ENCODE measurements at regions of chr10 and their contacts with region 1.

Region 1: GRCh38 chr10:70381471-70382421 is 679 bp downstream of the LRRC20 start:
- DNase-seq: peak; percentile 65 to 72
- H3K4me3 ChIP-seq: peak overlapping the region; percentile 73
- H3K4me3 Mint-ChIP-seq: peak overlapping the region; percentile 83
- H3K27ac Mint-ChIP-seq: peak overlapping the region; percentile 61
- H3K4me1 ChIP-seq: peaks cover 38% of the 10 kb centered on the region
- H3K4me1 Mint-ChIP-seq: peaks cover 21% of the 10 kb centered on the region
- H3K27me3 ChIP-seq: no peaks in the 10 kb centered on the region
- H3K27me3 Mint-ChIP-seq: no peaks in the 10 kb centered on the region
- CTCF ChIP-seq: no peak

Region 2: GRCh38 chr10:69527961-69528360 is 853.8 kb before region 1 on chr10:
- CTCF ChIA-PET with region 1: no interaction called
- POLR2A ChIA-PET with region 1: no interaction called
- intact Hi-C with region 1: no loop called
- DNase-seq: no peak
- H3K4me3 ChIP-seq: no peak overlapping the region
- H3K4me3 Mint-ChIP-seq: no peak overlapping the region
- H3K27ac Mint-ChIP-seq: no peak overlapping the region
- H3K4me1 ChIP-seq: no peaks in the 10 kb centered on the region
- H3K4me1 Mint-ChIP-seq: no peaks in the 10 kb centered on the region
- H3K27me3 ChIP-seq: no peaks in the 10 kb centered on the region; the same call in 1 of the 2 replicates
- H3K27me3 Mint-ChIP-seq: peaks cover 17% of the 10 kb centered on the region
- CTCF ChIP-seq: no peak

Region 3: DNA sequence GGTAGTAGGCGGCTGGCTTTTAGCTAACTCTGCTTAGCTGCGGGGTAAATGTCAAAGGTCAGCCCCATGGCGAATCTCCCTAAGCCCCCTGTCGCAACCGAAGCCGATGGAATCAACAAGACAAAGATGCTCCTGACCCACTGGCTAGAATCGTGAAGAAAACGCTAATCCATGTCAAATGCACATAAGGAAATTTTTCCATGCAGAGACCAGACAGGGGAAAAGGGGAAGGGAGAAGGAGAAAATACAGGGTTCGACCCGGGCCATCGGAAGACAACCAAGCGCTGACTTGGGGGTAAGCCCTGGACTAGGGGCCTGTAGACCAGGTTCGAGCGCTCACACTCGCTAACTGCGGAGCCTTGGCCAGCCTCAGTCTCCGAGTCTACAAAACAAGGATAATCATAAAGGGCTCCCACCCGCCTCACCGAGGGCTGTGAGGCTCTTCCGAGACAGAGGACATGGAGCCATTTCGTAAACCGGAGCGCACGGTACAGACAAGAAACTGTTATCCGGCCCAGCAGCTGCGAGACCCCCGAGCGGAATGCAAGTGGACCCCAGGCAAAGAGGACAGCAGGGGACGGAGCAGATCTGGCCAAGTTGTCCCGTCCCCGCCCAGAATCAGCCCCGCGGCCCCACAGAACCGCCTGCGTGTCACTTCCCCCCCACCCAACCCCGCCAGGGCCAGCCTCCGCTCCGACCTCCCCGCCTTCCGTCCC is 211.9 kb before region 1 on chr10:
- CTCF ChIA-PET with region 1: interaction called, 8 read pairs
- POLR2A ChIA-PET with region 1: interaction called, 16 read pairs
- intact Hi-C with region 1: no loop called
- DNase-seq: peak in 1 of 2 experiments; percentile 33
- H3K4me3 ChIP-seq: peak overlapping the region; percentile 66
- H3K4me3 Mint-ChIP-seq: peak overlapping the region; percentile 96
- H3K27ac Mint-ChIP-seq: peak overlapping the region; percentile 98
- H3K4me1 ChIP-seq: peaks cover 5% of the 10 kb centered on the region
- H3K4me1 Mint-ChIP-seq: peaks cover 24% of the 10 kb centered on the region
- H3K27me3 ChIP-seq: no peaks in the 10 kb centered on the region
- H3K27me3 Mint-ChIP-seq: no peaks in the 10 kb centered on the region
- CTCF ChIP-seq: no peak

Region 4: DNA sequence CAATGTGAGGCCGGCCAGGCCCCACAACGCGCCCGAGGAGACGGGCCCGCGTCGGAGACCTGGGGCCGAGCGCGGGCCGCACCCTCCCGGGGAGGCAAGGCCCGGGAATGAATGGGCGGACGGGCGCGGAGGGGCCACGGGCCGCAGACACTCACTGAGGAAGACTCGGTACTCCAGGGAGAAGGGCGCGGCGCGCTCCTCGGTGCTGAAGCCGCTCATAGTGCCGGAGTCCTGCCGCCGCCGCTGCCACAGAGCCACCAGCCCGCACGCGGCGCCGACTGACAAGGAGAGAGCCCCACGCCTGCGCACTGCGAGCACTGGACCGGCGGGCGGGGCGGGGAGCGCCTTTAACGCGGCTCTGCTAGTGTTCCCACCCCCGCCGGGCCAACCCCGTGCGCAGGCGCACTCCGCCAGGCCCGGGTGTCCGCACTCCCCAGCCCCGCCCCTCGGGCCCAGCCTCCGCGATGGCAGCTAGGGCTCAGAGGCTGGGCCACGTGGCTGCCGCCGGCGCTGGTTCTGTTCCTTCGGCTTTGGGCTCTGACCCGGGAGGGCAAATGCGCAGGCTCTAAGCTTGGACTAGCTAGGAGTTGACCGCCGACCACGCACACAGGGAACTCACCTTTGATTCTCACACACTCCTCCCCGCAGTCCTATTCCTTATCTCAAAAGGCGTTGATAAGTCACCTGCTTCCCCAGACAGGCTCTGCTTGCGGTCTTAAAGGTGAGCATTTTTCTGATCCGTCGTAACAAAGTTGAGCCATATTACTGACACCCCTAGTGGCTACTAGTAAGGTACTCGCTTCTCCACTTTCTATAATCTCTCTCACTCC is 148.4 kb before region 1 on chr10 and contains the start of gene PPA1:
- CTCF ChIA-PET with region 1: interaction called, 12 read pairs
- POLR2A ChIA-PET with region 1: interaction called, 6 read pairs
- intact Hi-C with region 1: loop called (anchors 2 kb)
- DNase-seq: peak; percentile 99 to 100
- H3K4me3 ChIP-seq: peak within 1 kb of the TSS; percentile 85
- H3K4me3 Mint-ChIP-seq: peak within 1 kb of the TSS; percentile 76
- H3K27ac Mint-ChIP-seq: peak within 1 kb of the TSS; percentile 99
- H3K4me1 ChIP-seq: peaks cover 19% of the 10 kb centered on the region
- H3K4me1 Mint-ChIP-seq: peaks cover 19% of the 10 kb centered on the region
- H3K27me3 ChIP-seq: no peaks in the 10 kb centered on the region
- H3K27me3 Mint-ChIP-seq: no peaks in the 10 kb centered on the region
- CTCF ChIP-seq: peak; percentile 56 to 81
- total RNA-seq, gene PPA1: 350 and 353 TPM in 2 replicates

Region 5: GRCh38 chr10:70324339-70324861 is 57.3 kb before region 1 on chr10:
- CTCF ChIA-PET with region 1: interaction called, 10 read pairs
- POLR2A ChIA-PET with region 1: no interaction called
- intact Hi-C with region 1: no loop called
- DNase-seq: peak in 1 of 2 experiments; percentile 31
- H3K4me3 ChIP-seq: no peak overlapping the region
- H3K4me3 Mint-ChIP-seq: no peak overlapping the region
- H3K27ac Mint-ChIP-seq: peak overlapping the region; percentile 24
- H3K4me1 ChIP-seq: peaks cover 22% of the 10 kb centered on the region
- H3K4me1 Mint-ChIP-seq: peaks cover 21% of the 10 kb centered on the region
- H3K27me3 ChIP-seq: no peaks in the 10 kb centered on the region
- H3K27me3 Mint-ChIP-seq: no peaks in the 10 kb centered on the region
- CTCF ChIP-seq: no peak

Region 6: GRCh38 chr10:70363971-70364771 is 17.6 kb before region 1 on chr10:
- CTCF ChIA-PET with region 1: interaction called, 48 read pairs
- POLR2A ChIA-PET with region 1: interaction called, 4 read pairs
- intact Hi-C with region 1: no loop called
- DNase-seq: peak; percentile 94 to 97
- H3K4me3 ChIP-seq: no peak overlapping the region
- H3K4me3 Mint-ChIP-seq: no peak overlapping the region
- H3K27ac Mint-ChIP-seq: peak overlapping the region; percentile 33
- H3K4me1 ChIP-seq: peaks cover 16% of the 10 kb centered on the region
- H3K4me1 Mint-ChIP-seq: peaks cover 28% of the 10 kb centered on the region
- H3K27me3 ChIP-seq: no peaks in the 10 kb centered on the region
- H3K27me3 Mint-ChIP-seq: no peaks in the 10 kb centered on the region
- CTCF ChIP-seq: peak; percentile 98 to 99

Region 7: GRCh38 chr10:70425096-70425495 is 43.4 kb after region 1 on chr10:
- CTCF ChIA-PET with region 1: interaction called, 16 read pairs
- POLR2A ChIA-PET with region 1: interaction called, 3 read pairs
- intact Hi-C with region 1: loop called (anchors 2 kb)
- DNase-seq: peak; percentile 73 to 78
- H3K4me3 ChIP-seq: no peak overlapping the region
- H3K4me3 Mint-ChIP-seq: peak overlapping the region; percentile 51
- H3K27ac Mint-ChIP-seq: peak overlapping the region; percentile 88
- H3K4me1 ChIP-seq: peaks cover 65% of the 10 kb centered on the region
- H3K4me1 Mint-ChIP-seq: peaks cover 49% of the 10 kb centered on the region
- H3K27me3 ChIP-seq: no peaks in the 10 kb centered on the region
- H3K27me3 Mint-ChIP-seq: no peaks in the 10 kb centered on the region
- CTCF ChIP-seq: no peak

Region 8: GRCh38 chr10:70540089-70540788 is 158.5 kb after region 1 on chr10:
- CTCF ChIA-PET with region 1: no interaction called
- POLR2A ChIA-PET with region 1: no interaction called
- intact Hi-C with region 1: loop called (anchors 2 kb)
- DNase-seq: peak in 1 of 2 experiments; percentile 67
- H3K4me3 ChIP-seq: no peak overlapping the region
- H3K4me3 Mint-ChIP-seq: no peak overlapping the region
- H3K27ac Mint-ChIP-seq: no peak overlapping the region
- H3K4me1 ChIP-seq: no peaks in the 10 kb centered on the region
- H3K4me1 Mint-ChIP-seq: no peaks in the 10 kb centered on the region
- H3K27me3 ChIP-seq: no peaks in the 10 kb centered on the region
- H3K27me3 Mint-ChIP-seq: no peaks in the 10 kb centered on the region
- CTCF ChIP-seq: peak; percentile 86 to 94

Measured in Caco-2 (cell line).